IMR-90 (cell line): ENCODE measurements at regions of chr10 and their contacts with region 1.

Region 1: DNA sequence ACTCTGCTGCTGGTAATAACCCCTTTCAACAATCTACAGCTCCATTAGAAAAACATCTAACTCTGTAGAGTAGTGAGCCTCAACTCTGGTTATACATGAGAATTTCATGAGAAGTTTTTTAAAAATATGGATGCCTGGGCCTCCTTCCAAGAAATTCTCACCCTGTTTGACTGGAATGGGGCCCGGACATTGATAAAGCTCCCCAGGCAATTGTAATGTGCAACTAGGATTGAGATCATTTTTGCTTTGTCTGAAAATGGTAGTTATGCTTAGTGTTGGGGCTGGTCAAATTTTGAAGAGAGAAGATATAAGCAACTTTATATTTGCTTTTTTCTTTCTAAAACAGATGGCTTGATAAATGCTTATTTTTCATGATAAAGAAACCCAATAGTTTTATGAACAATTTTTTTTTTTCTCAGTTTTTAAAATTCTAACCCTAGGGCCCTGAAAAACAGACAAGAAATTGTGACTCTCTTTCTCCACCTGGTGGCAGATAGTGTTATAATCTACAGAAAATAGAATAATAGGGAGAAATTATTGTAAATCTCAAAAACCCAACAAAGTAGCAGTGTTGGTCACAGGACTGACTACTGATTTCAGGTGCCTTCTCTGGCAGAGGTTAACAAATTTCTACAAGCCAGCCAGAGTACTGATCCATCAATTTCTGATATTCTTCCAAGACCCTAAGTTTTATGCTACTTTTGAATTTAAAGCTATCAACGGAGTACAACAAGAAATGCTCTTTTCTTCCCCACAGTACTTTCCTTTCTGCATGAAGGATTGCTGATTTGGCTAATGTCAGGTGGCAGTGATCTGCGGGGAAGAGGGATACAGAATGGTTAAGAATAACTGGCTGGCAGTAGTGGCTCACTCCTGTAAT is 174.8 kb downstream of the DKK1 start:
- DNase-seq: peak; percentile 61
- ATAC-seq: peak; percentile 50
- H3K4me3 ChIP-seq: no peak overlapping the region
- H3K27ac ChIP-seq: peak overlapping the region; percentile 61
- H3K4me1 ChIP-seq: peaks cover 10% of the 10 kb centered on the region
- H3K27me3 ChIP-seq: no peaks in the 10 kb centered on the region
- CTCF ChIP-seq: peak; percentile 72
- POLR2A ChIP-seq: no peak
- RAD21 ChIP-seq: peak; percentile 75

Region 2: GRCh38 chr10:51759896-51760534 is 728.8 kb before region 1 on chr10:
- CTCF ChIA-PET with region 1: no interaction called
- POLR2A ChIA-PET with region 1: no interaction called
- dilution Hi-C with region 1: no loop called
- in situ Hi-C with region 1: no loop called
- intact Hi-C with region 1: no loop called
- DNase-seq: no peak
- ATAC-seq: no peak
- H3K4me3 ChIP-seq: no peak overlapping the region
- H3K27ac ChIP-seq: no peak overlapping the region
- H3K4me1 ChIP-seq: no peaks in the 10 kb centered on the region
- H3K27me3 ChIP-seq: no peaks in the 10 kb centered on the region
- CTCF ChIP-seq: no peak
- POLR2A ChIP-seq: no peak
- RAD21 ChIP-seq: no peak

Region 3: GRCh38 chr10:52004342-52004949 is 484.4 kb before region 1 on chr10:
- CTCF ChIA-PET with region 1: no interaction called
- POLR2A ChIA-PET with region 1: no interaction called
- dilution Hi-C with region 1: no loop called
- in situ Hi-C with region 1: no loop called
- intact Hi-C with region 1: no loop called
- DNase-seq: peak; percentile 67
- ATAC-seq: peak; percentile 85
- H3K4me3 ChIP-seq: no peak overlapping the region
- H3K27ac ChIP-seq: no peak overlapping the region
- H3K4me1 ChIP-seq: peaks cover 1% of the 10 kb centered on the region; the same call in 1 of the 2 replicates
- H3K27me3 ChIP-seq: no peaks in the 10 kb centered on the region
- CTCF ChIP-seq: peak; percentile 75
- POLR2A ChIP-seq: no peak
- RAD21 ChIP-seq: peak; percentile 78

Region 4: GRCh38 chr10:52313933-52314816 is 174.7 kb before region 1 on chr10 and contains the start of gene DKK1:
- CTCF ChIA-PET with region 1: interaction called, 48 read pairs
- POLR2A ChIA-PET with region 1: interaction called, 9 read pairs
- dilution Hi-C with region 1: no loop called
- in situ Hi-C with region 1: loop called (anchors 5 kb)
- intact Hi-C with region 1: loop called (anchors 1 kb)
- DNase-seq: peak; percentile 76
- ATAC-seq: peak; percentile 75
- H3K4me3 ChIP-seq: peak within 1 kb of the TSS; percentile 81
- H3K27ac ChIP-seq: peak within 1 kb of the TSS; percentile 83
- H3K4me1 ChIP-seq: peaks cover 4% of the 10 kb centered on the region; the same call in 1 of the 2 replicates
- H3K27me3 ChIP-seq: no peaks in the 10 kb centered on the region
- CTCF ChIP-seq: peak; percentile 89
- POLR2A ChIP-seq: peak; percentile 85
- RAD21 ChIP-seq: peak; percentile 79
- total RNA-seq, gene DKK1: 74.7 and 116 TPM in 2 replicates

Region 5: GRCh38 chr10:52451817-52452216 is 37.0 kb before region 1 on chr10:
- CTCF ChIA-PET with region 1: no interaction called
- POLR2A ChIA-PET with region 1: no interaction called
- dilution Hi-C with region 1: no loop called
- in situ Hi-C with region 1: no loop called
- intact Hi-C with region 1: loop called (anchors 5 kb)
- DNase-seq: peak; percentile 76
- ATAC-seq: peak; percentile 71
- H3K4me3 ChIP-seq: no peak overlapping the region
- H3K27ac ChIP-seq: no peak overlapping the region
- H3K4me1 ChIP-seq: peaks cover 20% of the 10 kb centered on the region
- H3K27me3 ChIP-seq: no peaks in the 10 kb centered on the region
- CTCF ChIP-seq: no peak
- POLR2A ChIP-seq: no peak
- RAD21 ChIP-seq: no peak

Region 6: GRCh38 chr10:52566471-52567246 is 77.8 kb after region 1 on chr10:
- CTCF ChIA-PET with region 1: interaction called, 18 read pairs
- POLR2A ChIA-PET with region 1: no interaction called
- dilution Hi-C with region 1: no loop called
- in situ Hi-C with region 1: loop called (anchors 5 kb)
- intact Hi-C with region 1: loop called (anchors 1 kb)
- DNase-seq: peak; percentile 69
- ATAC-seq: peak; percentile 78
- H3K4me3 ChIP-seq: no peak overlapping the region; the same call in 1 of the 2 replicates
- H3K27ac ChIP-seq: no peak overlapping the region
- H3K4me1 ChIP-seq: peaks cover 3% of the 10 kb centered on the region
- H3K27me3 ChIP-seq: no peaks in the 10 kb centered on the region
- CTCF ChIP-seq: peak; percentile 89
- POLR2A ChIP-seq: no peak
- RAD21 ChIP-seq: peak; percentile 84

Region 7: GRCh38 chr10:52729271-52730104 is 240.6 kb after region 1 on chr10:
- CTCF ChIA-PET with region 1: no interaction called
- POLR2A ChIA-PET with region 1: no interaction called
- dilution Hi-C with region 1: no loop called
- in situ Hi-C with region 1: no loop called
- intact Hi-C with region 1: loop called (anchors 5 kb)
- DNase-seq: peak; percentile 43
- ATAC-seq: peak; percentile 82
- H3K4me3 ChIP-seq: no peak overlapping the region
- H3K27ac ChIP-seq: no peak overlapping the region
- H3K4me1 ChIP-seq: no peaks in the 10 kb centered on the region
- H3K27me3 ChIP-seq: no peaks in the 10 kb centered on the region
- CTCF ChIP-seq: peak; percentile 68
- POLR2A ChIP-seq: no peak
- RAD21 ChIP-seq: peak; percentile 66